IMR-90 (cell line): ENCODE measurements at regions of chr5 and their contacts with region 1.

Region 1: GRCh38 chr5:77239126-77239741 is 28.8 kb downstream of the PDE8B start:
- DNase-seq: no peak
- ATAC-seq: no peak
- H3K4me3 ChIP-seq: no peak overlapping the region
- H3K27ac ChIP-seq: no peak overlapping the region
- H3K4me1 ChIP-seq: no peaks in the 10 kb centered on the region
- H3K27me3 ChIP-seq: peaks cover 14% of the 10 kb centered on the region
- CTCF ChIP-seq: peak; percentile 26; the same call in 1 of the 2 replicates
- POLR2A ChIP-seq: no peak
- RAD21 ChIP-seq: peak; percentile 26

Region 2: DNA sequence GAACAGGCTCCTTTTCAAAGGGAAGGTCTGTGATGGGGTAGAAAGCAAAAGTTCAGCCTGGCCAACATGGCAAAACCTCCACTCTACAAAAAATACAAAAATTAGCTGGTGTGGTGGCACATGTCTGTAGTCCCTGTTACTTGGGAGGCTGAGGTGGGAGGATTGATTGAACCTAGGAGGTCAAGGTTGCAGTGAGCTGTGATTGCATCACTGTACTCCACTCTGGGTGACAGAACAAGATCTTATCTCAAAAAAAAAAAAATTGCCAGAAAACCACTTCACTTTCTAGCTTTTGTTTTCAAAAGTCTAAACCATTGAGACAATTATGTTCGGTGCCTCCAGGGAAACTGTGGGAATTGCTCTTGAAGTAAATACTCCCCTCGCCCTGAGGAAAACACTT is 345.9 kb before region 1 on chr5:
- CTCF ChIA-PET with region 1: no interaction called
- POLR2A ChIA-PET with region 1: no interaction called
- dilution Hi-C with region 1: no loop called
- in situ Hi-C with region 1: loop called (anchors 25 kb)
- intact Hi-C with region 1: no loop called
- DNase-seq: no peak
- ATAC-seq: no peak
- H3K4me3 ChIP-seq: no peak overlapping the region
- H3K27ac ChIP-seq: no peak overlapping the region
- H3K4me1 ChIP-seq: no peaks in the 10 kb centered on the region
- H3K27me3 ChIP-seq: peaks cover 15% of the 10 kb centered on the region
- CTCF ChIP-seq: no peak
- POLR2A ChIP-seq: no peak
- RAD21 ChIP-seq: no peak